Mammary epithelial cell (primary cell): ENCODE measurements at regions of chr11 and their contacts with region 1.

Region 1: DNA sequence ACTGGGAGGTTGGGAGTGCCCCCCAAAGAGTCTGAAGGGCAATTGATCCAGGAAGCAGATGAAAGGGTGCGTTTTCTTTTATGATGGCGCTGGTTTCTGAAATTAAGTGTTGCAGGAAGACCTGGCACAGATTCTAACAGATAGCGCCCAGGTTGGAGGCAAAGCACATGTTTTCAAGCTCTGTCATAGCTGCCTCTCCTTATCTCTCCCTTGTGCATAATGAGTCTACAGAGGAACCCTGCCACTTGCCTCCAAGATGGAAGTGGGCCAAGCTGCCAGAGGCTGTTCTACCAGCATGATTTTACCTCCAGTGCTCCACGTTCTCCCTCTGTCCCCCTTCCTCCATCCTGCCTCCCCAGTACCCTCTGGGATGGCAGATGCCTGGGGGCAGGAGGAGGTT is 30.0 kb upstream of the TLCD5 start:
- DNase-seq: no peak
- H3K4me3 ChIP-seq: no peak overlapping the region
- H3K27ac ChIP-seq: no peak overlapping the region
- H3K4me1 ChIP-seq: peaks cover 18% of the 10 kb centered on the region
- H3K27me3 ChIP-seq: no peaks in the 10 kb centered on the region
- CTCF ChIP-seq: no peak

Region 2: GRCh38 chr11:120178561-120179056 is 116.5 kb before region 1 on chr11:
- CTCF ChIA-PET with region 1: no interaction called
- dilution Hi-C with region 1: no loop called
- in situ Hi-C with region 1: loop called (anchors 5 kb)
- intact Hi-C with region 1: no loop called
- DNase-seq: no peak
- H3K4me3 ChIP-seq: no peak overlapping the region
- H3K27ac ChIP-seq: no peak overlapping the region
- H3K4me1 ChIP-seq: no peaks in the 10 kb centered on the region
- H3K27me3 ChIP-seq: no peaks in the 10 kb centered on the region
- CTCF ChIP-seq: no peak

Region 3: GRCh38 chr11:120254788-120255518 is 40.1 kb before region 1 on chr11:
- CTCF ChIA-PET with region 1: no interaction called
- dilution Hi-C with region 1: loop called (anchors 5 kb)
- in situ Hi-C with region 1: no loop called
- intact Hi-C with region 1: no loop called
- DNase-seq: no peak
- H3K4me3 ChIP-seq: no peak overlapping the region
- H3K27ac ChIP-seq: no peak overlapping the region
- H3K4me1 ChIP-seq: no peaks in the 10 kb centered on the region
- H3K27me3 ChIP-seq: no peaks in the 10 kb centered on the region
- CTCF ChIP-seq: no peak

Region 4: DNA sequence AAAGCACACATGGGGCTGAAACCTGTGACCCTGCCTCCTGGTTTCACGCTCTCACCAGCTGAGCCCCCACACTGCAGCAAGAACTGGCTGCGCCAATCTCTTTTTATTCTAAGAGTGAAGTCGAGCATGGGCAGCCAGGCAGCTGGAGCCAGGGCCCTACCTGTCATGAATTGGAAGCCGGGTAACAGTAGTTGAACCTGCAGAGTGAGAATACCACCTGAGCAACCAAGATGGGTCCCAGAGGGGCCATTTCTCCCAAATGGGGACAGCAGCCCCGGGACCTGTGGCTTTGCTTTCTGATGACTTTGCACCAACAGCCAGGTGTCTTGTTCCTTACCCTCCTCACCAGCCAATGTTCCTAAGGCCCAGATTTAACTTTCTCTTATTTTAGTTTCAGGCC is 395.3 kb after region 1 on chr11:
- CTCF ChIA-PET with region 1: no interaction called
- dilution Hi-C with region 1: no loop called
- in situ Hi-C with region 1: no loop called
- intact Hi-C with region 1: no loop called
- DNase-seq: no peak
- H3K4me3 ChIP-seq: no peak overlapping the region
- H3K27ac ChIP-seq: no peak overlapping the region
- H3K4me1 ChIP-seq: no peaks in the 10 kb centered on the region
- H3K27me3 ChIP-seq: peaks cover 1% of the 10 kb centered on the region
- CTCF ChIP-seq: no peak

Region 5: GRCh38 chr11:121048464-121049233 is 753.6 kb after region 1 on chr11:
- CTCF ChIA-PET with region 1: no interaction called
- dilution Hi-C with region 1: no loop called
- in situ Hi-C with region 1: no loop called
- intact Hi-C with region 1: no loop called
- DNase-seq: peak; percentile 49
- H3K4me3 ChIP-seq: no peak overlapping the region
- H3K27ac ChIP-seq: no peak overlapping the region
- H3K4me1 ChIP-seq: no peaks in the 10 kb centered on the region
- H3K27me3 ChIP-seq: no peaks in the 10 kb centered on the region
- CTCF ChIP-seq: no peak